IMR-90 (cell line): ENCODE measurements at regions of chr5 and their contacts with region 1.

Region 1: GRCh38 chr5:113425914-113426313 is 8.9 kb downstream of the TSSK1B start:
- DNase-seq: no peak
- ATAC-seq: no peak
- H3K4me3 ChIP-seq: no peak overlapping the region
- H3K27ac ChIP-seq: no peak overlapping the region
- H3K4me1 ChIP-seq: no peaks in the 10 kb centered on the region
- H3K27me3 ChIP-seq: no peaks in the 10 kb centered on the region
- CTCF ChIP-seq: no peak
- POLR2A ChIP-seq: no peak
- RAD21 ChIP-seq: no peak

Region 2: DNA sequence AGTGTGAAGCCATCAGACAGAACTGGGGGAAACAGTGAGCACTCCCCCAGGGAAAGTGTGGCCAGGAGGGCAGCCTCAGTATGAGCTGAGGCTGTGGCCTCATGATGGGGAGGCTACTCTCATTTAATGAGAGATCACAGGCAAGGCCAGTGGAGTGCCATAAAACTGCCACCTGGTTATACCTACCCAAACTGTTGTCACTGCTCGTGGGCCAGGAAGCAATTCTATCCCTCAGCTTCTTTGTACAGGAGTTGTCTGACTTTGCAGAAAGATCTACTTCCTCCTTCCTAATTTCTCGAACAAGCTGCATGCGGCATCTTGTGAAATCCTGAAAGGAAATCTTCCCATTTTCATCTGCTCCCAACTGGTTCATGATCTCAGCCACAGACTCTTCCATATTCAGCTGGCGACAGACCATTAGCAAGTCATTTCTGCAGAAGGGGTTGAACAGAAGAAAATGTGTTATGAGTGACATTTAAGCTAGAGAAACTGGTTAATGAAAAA is 41.1 kb before region 1 on chr5:
- CTCF ChIA-PET with region 1: no interaction called
- POLR2A ChIA-PET with region 1: no interaction called
- dilution Hi-C with region 1: no loop called
- in situ Hi-C with region 1: no loop called
- intact Hi-C with region 1: loop called (anchors 5 kb)
- DNase-seq: no peak
- ATAC-seq: no peak
- H3K4me3 ChIP-seq: no peak overlapping the region
- H3K27ac ChIP-seq: no peak overlapping the region
- H3K4me1 ChIP-seq: peaks cover 16% of the 10 kb centered on the region
- H3K27me3 ChIP-seq: no peaks in the 10 kb centered on the region
- CTCF ChIP-seq: no peak
- POLR2A ChIP-seq: no peak
- RAD21 ChIP-seq: no peak

Region 3: DNA sequence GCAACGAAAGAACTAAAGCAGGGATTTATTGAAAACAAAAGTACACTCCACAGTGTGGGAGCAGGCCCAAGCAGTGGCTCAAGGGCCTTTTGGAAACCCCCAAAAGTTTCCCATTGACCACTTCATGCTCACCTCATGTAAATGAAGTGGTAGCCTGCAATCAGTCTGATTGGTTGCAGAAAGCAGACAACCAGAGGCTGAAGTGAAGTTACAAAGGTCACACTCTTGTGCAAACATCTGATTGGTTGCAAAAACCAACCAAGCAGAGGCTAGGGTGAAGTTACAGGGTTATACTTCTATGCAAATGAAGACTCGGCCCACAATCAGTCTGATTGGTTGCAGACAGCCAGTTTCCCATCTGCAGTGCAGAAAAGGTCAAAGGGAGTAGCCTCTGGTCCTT is 345.6 kb after region 1 on chr5:
- CTCF ChIA-PET with region 1: no interaction called
- POLR2A ChIA-PET with region 1: no interaction called
- dilution Hi-C with region 1: no loop called
- in situ Hi-C with region 1: no loop called
- intact Hi-C with region 1: no loop called
- DNase-seq: no peak
- ATAC-seq: no peak
- H3K4me3 ChIP-seq: no peak overlapping the region
- H3K27ac ChIP-seq: no peak overlapping the region
- H3K4me1 ChIP-seq: no peaks in the 10 kb centered on the region
- H3K27me3 ChIP-seq: no peaks in the 10 kb centered on the region
- CTCF ChIP-seq: no peak
- POLR2A ChIP-seq: no peak
- RAD21 ChIP-seq: no peak